ENCODE measurements at regions of chr3 and their contacts with region 1.

Region 1: GRCh38 chr3:50292159-50293078 is at the start of gene IFRD2:
- DNase-seq: peak; percentile 81 to 97 (median 94)
- ATAC-seq: peak; percentile 99
- H3K4me3 ChIP-seq: peak within 1 kb of the TSS; percentile 62
- H3K4me3 Mint-ChIP-seq: peak within 1 kb of the TSS; percentile 81 to 99 (median 88)
- H3K27ac ChIP-seq: peak within 1 kb of the TSS; percentile 79
- H3K27ac Mint-ChIP-seq: peak within 1 kb of the TSS; percentile 85 to 97 (median 93)
- H3K4me1 ChIP-seq: peaks cover 13 to 16% of the 10 kb centered on the region in 2 donors
- H3K4me1 Mint-ChIP-seq: peaks cover 16 to 22% (median 19%) of the 10 kb centered on the region in 7 donors
- H3K27me3 ChIP-seq: no peaks in the 10 kb centered on the region
- H3K27me3 Mint-ChIP-seq: no peaks in the 10 kb centered on the region
- total RNA-seq, gene IFRD2: 53.7 to 85.1 (median 64.7) TPM

Region 2: DNA sequence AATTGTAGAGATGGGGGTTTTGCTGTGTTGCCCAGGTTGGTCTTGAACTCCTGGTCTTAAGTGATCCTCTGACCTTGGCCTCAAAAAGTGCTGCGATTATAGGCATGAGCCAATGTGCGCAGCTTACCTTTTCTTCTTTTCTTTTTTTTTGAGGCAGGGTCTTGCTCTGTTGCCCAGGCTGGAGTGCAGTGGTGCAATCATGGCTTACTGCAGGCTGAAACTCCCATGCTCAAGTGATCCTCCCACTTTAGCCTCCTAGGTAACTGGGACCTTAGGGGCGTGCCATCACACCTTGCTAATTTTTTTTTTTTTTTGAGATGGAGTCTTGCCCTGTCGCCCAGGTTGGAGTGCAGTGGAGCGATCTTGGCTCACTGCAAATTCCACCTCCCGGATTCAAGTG is 339.5 kb before region 1 on chr3:
- CTCF ChIA-PET with region 1: no interaction called
- POLR2A ChIA-PET with region 1: no interaction called
- intact Hi-C with region 1: no loop called
- DNase-seq: no peak
- ATAC-seq: no peak
- H3K4me3 ChIP-seq: no peak overlapping the region
- H3K4me3 Mint-ChIP-seq: no peak overlapping the region
- H3K27ac ChIP-seq: no peak overlapping the region
- H3K27ac Mint-ChIP-seq: peak overlapping the region in 1 of 9 donors; percentile 36
- H3K4me1 ChIP-seq: no peaks in the 10 kb centered on the region
- H3K4me1 Mint-ChIP-seq: peaks cover 12 to 45% (median 31%) of the 10 kb centered on the region in 7 donors
- H3K27me3 ChIP-seq: no peaks in the 10 kb centered on the region
- H3K27me3 Mint-ChIP-seq: no peaks in the 10 kb centered on the region

Region 3: DNA sequence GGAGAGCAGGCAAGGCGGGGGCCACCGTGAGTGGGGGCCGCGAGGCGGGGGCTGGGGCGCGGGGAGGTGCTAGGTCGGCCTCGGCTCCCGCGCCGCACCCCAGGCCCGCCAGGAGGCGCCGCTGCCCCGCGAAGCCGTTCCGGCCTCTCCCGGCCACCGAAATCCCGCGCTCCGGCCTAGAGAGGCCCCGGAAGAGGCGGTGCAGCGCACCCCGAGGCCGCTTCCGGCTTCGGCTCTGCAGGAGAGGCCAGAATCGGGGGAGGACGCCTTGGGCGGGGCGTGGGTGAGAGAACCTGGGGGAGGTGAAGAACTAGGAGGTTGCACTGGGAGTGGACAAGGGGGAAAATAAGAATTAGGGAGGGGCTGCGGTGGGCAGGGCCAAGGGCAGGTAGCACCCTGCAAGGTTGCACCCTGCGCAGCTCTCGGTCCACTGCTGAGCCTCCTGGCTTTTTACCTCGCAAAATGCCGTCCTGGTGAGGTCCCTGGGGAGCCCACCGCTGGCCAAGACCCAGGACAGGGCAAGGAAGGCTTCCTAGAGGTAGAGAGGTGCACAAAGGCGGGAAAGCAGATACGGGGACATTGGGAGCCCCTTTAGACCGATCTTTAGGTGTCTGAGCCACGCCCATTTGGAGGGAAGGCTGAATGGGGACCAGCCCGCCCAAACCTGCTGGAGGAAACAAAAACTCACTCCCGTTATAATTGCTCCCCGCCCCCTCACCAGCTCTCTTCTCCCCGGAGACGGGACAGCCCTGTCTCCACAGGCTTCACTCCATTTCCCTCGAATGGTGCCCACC is 64.8 kb before region 1 on chr3:
- CTCF ChIA-PET with region 1: interaction called, 3 read pairs
- POLR2A ChIA-PET with region 1: interaction called, 3 read pairs
- intact Hi-C with region 1: loop called (anchors 1 kb)
- DNase-seq: peak; percentile 86 to 96 (median 91)
- ATAC-seq: peak; percentile 91
- H3K4me3 ChIP-seq: peak overlapping the region; percentile 88
- H3K4me3 Mint-ChIP-seq: peak overlapping the region; percentile 89 to 98 (median 96)
- H3K27ac ChIP-seq: peak overlapping the region; percentile 77
- H3K27ac Mint-ChIP-seq: peak overlapping the region; percentile 86 to 97 (median 93)
- H3K4me1 ChIP-seq: peaks cover 9 to 12% of the 10 kb centered on the region in 2 donors
- H3K4me1 Mint-ChIP-seq: peaks cover 16 to 36% (median 34%) of the 10 kb centered on the region in 7 donors
- H3K27me3 ChIP-seq: no peaks in the 10 kb centered on the region
- H3K27me3 Mint-ChIP-seq: peaks cover 0 to 17% (median 0%) of the 10 kb centered on the region in 5 donors

Region 4: GRCh38 chr3:50272911-50273693 is 19.3 kb before region 1 on chr3:
- CTCF ChIA-PET with region 1: no interaction called
- POLR2A ChIA-PET with region 1: no interaction called
- intact Hi-C with region 1: loop called in 1 of 2 experiments (anchors 1 kb)
- DNase-seq: peak; percentile 65 to 95 (median 80)
- ATAC-seq: peak; percentile 92
- H3K4me3 ChIP-seq: peak overlapping the region; percentile 48
- H3K4me3 Mint-ChIP-seq: peak overlapping the region; percentile 59 to 88 (median 76)
- H3K27ac ChIP-seq: no peak overlapping the region
- H3K27ac Mint-ChIP-seq: peak overlapping the region in 5 of 9 donors; percentile 20 to 82 (median 72)
- H3K4me1 ChIP-seq: peaks cover 10 to 22% of the 10 kb centered on the region in 2 donors
- H3K4me1 Mint-ChIP-seq: peaks cover 21 to 31% (median 26%) of the 10 kb centered on the region in 7 donors
- H3K27me3 ChIP-seq: peaks cover 15 to 23% of the 10 kb centered on the region in 2 donors
- H3K27me3 Mint-ChIP-seq: peaks cover 21 to 50% (median 29%) of the 10 kb centered on the region in 5 donors

Region 5: GRCh38 chr3:50327943-50328691 is 35.7 kb after region 1 on chr3 and contains the start of gene TUSC2:
- CTCF ChIA-PET with region 1: no interaction called
- POLR2A ChIA-PET with region 1: interaction called, 31 read pairs
- intact Hi-C with region 1: loop called (anchors 1 kb)
- DNase-seq: peak; percentile 83 to 94 (median 92)
- ATAC-seq: peak; percentile 97
- H3K4me3 ChIP-seq: peak within 1 kb of the TSS; percentile 89
- H3K4me3 Mint-ChIP-seq: peak within 1 kb of the TSS; percentile 84 to 97 (median 95)
- H3K27ac ChIP-seq: peak within 1 kb of the TSS; percentile 92
- H3K27ac Mint-ChIP-seq: peak within 1 kb of the TSS; percentile 85 to 96 (median 94)
- H3K4me1 ChIP-seq: peaks cover 12 to 15% of the 10 kb centered on the region in 2 donors
- H3K4me1 Mint-ChIP-seq: peaks cover 7 to 41% (median 29%) of the 10 kb centered on the region in 7 donors
- H3K27me3 ChIP-seq: no peaks in the 10 kb centered on the region
- H3K27me3 Mint-ChIP-seq: no peaks in the 10 kb centered on the region
- total RNA-seq, gene TUSC2: 16.8 to 25.0 (median 20.5) TPM

Region 6: GRCh38 chr3:50350527-50351322 is 58.3 kb after region 1 on chr3 and contains the starts of genes CYB561D2 and NPRL2:
- CTCF ChIA-PET with region 1: no interaction called
- POLR2A ChIA-PET with region 1: interaction called, 18 read pairs
- intact Hi-C with region 1: loop called in 1 of 2 experiments (anchors 1 kb)
- DNase-seq: peak; percentile 97 to 100 (median 99)
- ATAC-seq: peak; percentile 95
- H3K4me3 ChIP-seq: peak within 1 kb of the TSS; percentile 90
- H3K4me3 Mint-ChIP-seq: peak within 1 kb of the TSS; percentile 86 to 99 (median 96)
- H3K27ac ChIP-seq: peak within 1 kb of the TSS; percentile 93
- H3K27ac Mint-ChIP-seq: peak within 1 kb of the TSS; percentile 96 to 100 (median 99)
- H3K4me1 ChIP-seq: peaks cover 26 to 32% of the 10 kb centered on the region in 2 donors
- H3K4me1 Mint-ChIP-seq: peaks cover 24 to 78% (median 59%) of the 10 kb centered on the region in 7 donors
- H3K27me3 ChIP-seq: no peaks in the 10 kb centered on the region
- H3K27me3 Mint-ChIP-seq: no peaks in the 10 kb centered on the region
- total RNA-seq, gene CYB561D2: 23.3 to 42.6 (median 32.8) TPM
- total RNA-seq, gene NPRL2: 35.3 to 48.9 (median 47.7) TPM